MCF 10A (cell line): ENCODE measurements at regions of chr5 and their contacts with region 1.

Region 1: DNA sequence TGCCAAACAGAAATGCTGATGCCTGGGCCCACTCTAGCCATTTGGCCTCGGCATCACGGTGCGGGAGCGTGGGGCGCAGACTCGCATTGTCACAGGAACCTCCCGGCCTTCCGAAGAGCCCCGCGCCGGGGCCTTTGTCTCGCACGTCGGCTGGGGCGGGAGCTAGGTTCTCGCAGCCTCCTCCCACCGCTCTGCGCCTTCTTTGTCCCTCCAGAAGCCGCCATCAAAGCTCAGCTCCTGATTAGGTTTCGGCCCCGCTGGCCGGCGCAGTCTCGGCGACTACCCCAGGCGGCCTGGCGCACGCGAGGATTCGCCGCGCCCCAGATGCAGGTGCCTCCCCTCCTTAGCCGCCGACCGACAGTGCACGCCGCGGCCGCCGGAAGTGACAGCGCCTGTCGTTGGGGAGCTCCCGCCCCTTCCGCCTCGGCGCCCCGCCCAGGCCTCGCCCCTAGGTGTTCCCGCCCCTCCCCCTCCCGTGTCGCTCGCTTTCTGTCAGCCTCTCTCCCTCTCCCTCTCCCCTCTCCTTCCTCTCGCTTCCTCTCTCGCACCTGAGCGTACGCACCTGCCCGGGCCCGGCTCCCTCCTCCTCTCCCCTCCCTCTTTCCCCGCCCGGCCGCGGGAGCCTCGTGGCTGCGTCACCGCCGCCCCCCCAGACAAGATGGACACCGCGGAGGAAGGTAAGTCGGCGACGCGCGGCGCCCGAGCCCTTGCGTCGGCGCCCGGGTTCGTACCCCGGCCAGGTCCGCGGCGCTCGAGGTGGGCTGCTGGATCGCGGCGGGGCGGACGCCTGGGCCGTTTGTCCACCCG is at the start of gene MARCHF6:
- DNase-seq: peak; percentile 96
- H3K4me3 Mint-ChIP-seq: peak within 1 kb of the TSS; percentile 94
- H3K27ac Mint-ChIP-seq: peak within 1 kb of the TSS; percentile 99
- H3K4me1 Mint-ChIP-seq: peaks cover 19% of the 10 kb centered on the region
- H3K27me3 Mint-ChIP-seq: no peaks in the 10 kb centered on the region
- CTCF ChIP-seq: no peak
- total RNA-seq, gene MARCHF6: 118 and 131 TPM in 2 replicates

Region 2: DNA sequence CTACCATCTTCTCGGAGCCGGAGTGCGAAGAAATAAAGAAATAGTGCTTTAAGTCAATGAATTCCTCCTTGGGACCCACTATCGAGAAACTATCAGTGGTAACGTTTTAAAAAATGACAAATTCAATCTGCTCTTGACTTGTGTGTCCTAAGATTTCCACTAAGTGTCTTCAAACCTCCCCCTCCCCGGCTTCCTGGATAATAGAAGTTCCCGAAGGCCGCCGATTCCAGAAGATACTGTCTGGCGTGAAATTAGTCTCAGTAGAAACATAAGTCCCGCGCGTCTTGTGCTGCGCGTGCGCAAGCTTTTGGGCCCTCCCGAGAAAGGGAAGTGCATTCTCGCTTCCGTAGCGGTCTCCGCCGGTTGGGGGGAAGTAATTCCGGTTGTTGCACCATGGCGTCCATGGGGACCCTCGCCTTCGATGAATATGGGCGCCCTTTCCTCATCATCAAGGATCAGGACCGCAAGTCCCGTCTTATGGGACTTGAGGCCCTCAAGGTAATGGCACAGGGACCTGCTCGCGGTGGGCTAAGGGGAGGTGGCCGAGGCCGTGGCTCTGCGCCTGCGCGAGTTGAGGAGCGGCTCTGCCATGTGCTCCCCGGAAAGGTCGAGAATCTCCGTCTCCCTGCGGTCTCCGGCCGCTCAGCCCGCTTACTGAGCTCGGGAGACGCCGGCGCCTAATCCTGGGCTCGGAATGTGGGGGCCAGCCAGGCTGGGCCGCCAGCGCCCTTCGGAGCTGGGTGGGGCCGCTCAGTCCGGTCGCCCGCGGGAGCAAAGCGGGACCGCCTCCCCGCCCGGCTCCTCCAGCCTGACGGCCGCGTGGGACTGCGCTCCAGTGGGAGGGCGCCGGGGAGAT is 103.3 kb before region 1 on chr5 and contains the start of gene CCT5:
- CTCF ChIA-PET with region 1: no interaction called
- POLR2A ChIA-PET with region 1: interaction called, 40 read pairs
- intact Hi-C with region 1: no loop called
- DNase-seq: peak; percentile 98
- H3K4me3 Mint-ChIP-seq: peak within 1 kb of the TSS; percentile 84
- H3K27ac Mint-ChIP-seq: peak within 1 kb of the TSS; percentile 100
- H3K4me1 Mint-ChIP-seq: peaks cover 24% of the 10 kb centered on the region
- H3K27me3 Mint-ChIP-seq: no peaks in the 10 kb centered on the region
- CTCF ChIP-seq: no peak
- total RNA-seq, gene CCT5: 220 and 322 TPM in 2 replicates

Region 3: GRCh38 chr5:10283927-10284635 is 69.4 kb before region 1 on chr5:
- CTCF ChIA-PET with region 1: interaction called, 26 read pairs
- POLR2A ChIA-PET with region 1: interaction called, 36 read pairs
- intact Hi-C with region 1: loop called (anchors 1 kb)
- DNase-seq: peak; percentile 79
- H3K4me3 Mint-ChIP-seq: no peak overlapping the region
- H3K27ac Mint-ChIP-seq: no peak overlapping the region
- H3K4me1 Mint-ChIP-seq: peaks cover 16% of the 10 kb centered on the region
- H3K27me3 Mint-ChIP-seq: no peaks in the 10 kb centered on the region
- CTCF ChIP-seq: peak; percentile 93

Region 4: GRCh38 chr5:10301842-10302610 is 51.4 kb before region 1 on chr5:
- CTCF ChIA-PET with region 1: interaction called, 8 read pairs
- POLR2A ChIA-PET with region 1: interaction called, 226 read pairs
- intact Hi-C with region 1: no loop called
- DNase-seq: peak; percentile 92
- H3K4me3 Mint-ChIP-seq: peak overlapping the region; percentile 54
- H3K27ac Mint-ChIP-seq: peak overlapping the region; percentile 46
- H3K4me1 Mint-ChIP-seq: peaks cover 55% of the 10 kb centered on the region
- H3K27me3 Mint-ChIP-seq: no peaks in the 10 kb centered on the region
- CTCF ChIP-seq: no peak

Region 5: DNA sequence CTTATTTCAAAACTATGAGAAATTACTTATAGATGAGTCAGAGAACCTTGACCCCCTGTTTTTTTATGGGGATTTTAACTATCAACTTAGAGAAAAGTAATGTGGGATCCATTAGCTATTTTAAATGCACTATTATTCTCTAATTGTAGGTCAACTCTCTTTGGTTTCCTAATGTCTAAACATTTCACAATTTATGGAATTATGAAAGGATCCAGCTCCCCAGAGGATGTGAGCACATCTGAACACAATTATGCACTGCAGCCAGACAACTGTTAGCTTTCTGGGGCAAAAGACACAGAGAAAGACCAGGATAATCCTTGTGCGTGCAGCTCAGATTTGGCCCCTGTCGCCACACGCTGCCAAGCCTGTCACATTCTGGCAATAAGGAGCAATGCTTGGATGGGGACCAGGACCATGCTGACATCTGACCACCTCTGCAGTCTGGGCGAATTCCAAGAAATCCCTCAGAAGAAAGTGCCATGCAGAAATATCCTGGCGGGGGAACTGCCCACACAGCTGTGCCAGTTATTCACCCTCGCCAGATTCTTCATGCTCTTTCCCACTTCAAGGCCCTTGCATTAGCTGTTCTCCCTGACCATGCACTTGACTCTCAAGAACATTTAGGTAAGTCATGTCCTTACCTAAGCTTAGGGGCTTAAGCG is 23.5 kb before region 1 on chr5:
- CTCF ChIA-PET with region 1: interaction called, 3 read pairs
- POLR2A ChIA-PET with region 1: interaction called, 20 read pairs
- intact Hi-C with region 1: no loop called
- DNase-seq: peak; percentile 62
- H3K4me3 Mint-ChIP-seq: no peak overlapping the region
- H3K27ac Mint-ChIP-seq: no peak overlapping the region
- H3K4me1 Mint-ChIP-seq: peaks cover 37% of the 10 kb centered on the region
- H3K27me3 Mint-ChIP-seq: no peaks in the 10 kb centered on the region
- CTCF ChIP-seq: no peak

Region 6: GRCh38 chr5:10377081-10377480 is 23.6 kb after region 1 on chr5:
- CTCF ChIA-PET with region 1: no interaction called
- POLR2A ChIA-PET with region 1: interaction called, 21 read pairs
- intact Hi-C with region 1: no loop called
- DNase-seq: no peak
- H3K4me3 Mint-ChIP-seq: no peak overlapping the region
- H3K27ac Mint-ChIP-seq: no peak overlapping the region
- H3K4me1 Mint-ChIP-seq: peaks cover 22% of the 10 kb centered on the region
- H3K27me3 Mint-ChIP-seq: no peaks in the 10 kb centered on the region
- CTCF ChIP-seq: no peak

Region 7: GRCh38 chr5:10401498-10401897 is 48.1 kb after region 1 on chr5:
- CTCF ChIA-PET with region 1: interaction called, 4 read pairs
- POLR2A ChIA-PET with region 1: interaction called, 4 read pairs
- intact Hi-C with region 1: loop called (anchors 5 kb)
- DNase-seq: no peak
- H3K4me3 Mint-ChIP-seq: no peak overlapping the region
- H3K27ac Mint-ChIP-seq: peak overlapping the region; percentile 19
- H3K4me1 Mint-ChIP-seq: no peaks in the 10 kb centered on the region
- H3K27me3 Mint-ChIP-seq: no peaks in the 10 kb centered on the region
- CTCF ChIP-seq: no peak

Region 8: DNA sequence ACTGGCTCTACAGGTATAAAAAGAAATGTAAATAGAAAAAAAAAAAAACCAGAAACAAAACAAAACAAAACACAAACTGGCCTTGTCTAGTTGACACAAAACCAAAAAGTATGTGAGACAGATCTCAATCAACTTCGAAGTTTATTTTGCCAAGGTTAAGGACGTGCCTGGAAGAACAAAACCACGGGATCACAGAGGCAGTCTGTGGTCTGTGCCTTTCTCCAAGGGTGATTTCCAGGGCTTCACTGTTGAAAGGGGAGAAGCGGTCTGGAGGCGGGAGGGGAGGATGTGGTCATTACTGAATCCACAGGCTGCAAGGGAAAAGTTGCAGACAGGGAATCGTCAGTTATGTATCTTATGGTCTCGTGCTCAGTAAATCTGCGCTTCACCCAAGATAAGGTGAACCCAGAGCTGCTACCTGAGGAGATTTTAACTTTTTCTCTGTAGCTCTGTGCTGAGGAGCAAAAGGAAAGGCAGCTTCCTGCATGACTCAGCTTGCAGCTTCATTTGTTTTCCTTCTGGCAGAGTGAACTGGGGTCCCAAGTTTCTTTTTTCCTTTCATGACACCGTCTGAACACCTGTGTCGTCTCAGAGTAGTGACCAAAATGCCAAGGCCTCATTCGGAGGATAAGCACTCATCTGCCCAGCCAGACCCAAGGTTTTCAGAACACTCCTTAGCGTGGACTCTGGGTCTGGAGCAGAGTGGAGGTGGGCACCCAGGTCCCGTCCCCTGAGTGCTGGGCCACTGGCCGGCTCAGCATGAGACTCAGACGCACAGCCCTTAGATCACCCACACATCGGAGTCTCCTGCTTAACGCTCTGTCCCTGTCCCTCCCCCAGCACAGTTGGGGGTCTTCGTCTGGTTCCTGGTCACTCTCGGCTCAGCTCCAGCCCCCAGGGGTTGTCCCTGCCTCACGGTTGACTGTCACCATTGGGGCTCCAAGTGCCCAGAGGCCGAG is 114.1 kb after region 1 on chr5:
- CTCF ChIA-PET with region 1: no interaction called
- POLR2A ChIA-PET with region 1: no interaction called
- intact Hi-C with region 1: no loop called
- DNase-seq: peak; percentile 51
- H3K4me3 Mint-ChIP-seq: no peak overlapping the region
- H3K27ac Mint-ChIP-seq: peak overlapping the region; percentile 27
- H3K4me1 Mint-ChIP-seq: peaks cover 25% of the 10 kb centered on the region
- H3K27me3 Mint-ChIP-seq: no peaks in the 10 kb centered on the region
- CTCF ChIP-seq: no peak